H1 (cell line): ENCODE measurements at regions of chr3 and their contacts with region 1.

Region 1: DNA sequence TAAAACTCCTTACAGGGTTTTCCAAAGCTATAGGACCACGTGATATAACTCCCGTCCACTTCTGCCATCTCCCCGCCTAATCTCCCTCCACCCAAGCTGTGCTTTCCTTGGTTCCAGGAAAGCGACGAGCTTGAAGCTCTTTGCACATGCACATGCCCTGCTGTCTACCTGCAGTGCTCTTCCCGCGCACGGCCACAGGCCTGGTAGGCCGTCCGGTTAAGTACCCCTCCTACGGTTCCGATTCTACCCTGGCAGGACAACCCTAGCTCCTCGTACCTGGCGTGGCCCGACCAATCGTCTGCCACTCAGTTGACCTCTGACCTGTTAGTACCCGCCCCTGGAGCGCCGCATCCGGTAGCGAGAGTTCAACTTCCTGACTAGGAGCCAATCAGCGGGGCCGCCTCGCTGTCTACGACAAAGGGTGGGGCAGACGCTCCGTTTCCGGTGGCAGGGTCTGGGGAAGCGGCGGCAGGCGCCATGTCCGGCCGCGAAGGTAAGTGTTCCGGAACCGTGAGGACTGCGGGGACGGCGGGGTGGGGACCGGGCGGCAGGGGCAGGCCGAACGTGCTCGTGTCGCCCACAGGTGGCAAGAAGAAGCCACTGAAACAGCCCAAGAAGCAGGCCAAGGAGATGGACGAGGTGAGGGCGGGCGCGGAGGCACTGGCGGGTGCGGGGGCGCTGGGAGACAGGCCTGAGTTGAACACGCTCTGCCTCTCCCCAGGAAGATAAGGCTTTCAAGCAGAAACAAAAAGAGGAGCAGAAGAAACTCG is at the starts of genes CCDC51 and TMA7:
- DNase-seq: peak; percentile 94 to 97
- H3K4me3 ChIP-seq: peak within 1 kb of the TSS; percentile 80 to 99 (median 94)
- H3K27ac ChIP-seq: peak within 1 kb of the TSS; percentile 80
- H3K4me1 ChIP-seq: peaks cover 0 to 8% (median 3%) of the 10 kb centered on the region in 4 experiments; a peak in 5 of 7 replicates
- H3K27me3 ChIP-seq: no peaks in the 10 kb centered on the region
- CTCF ChIP-seq: no peak
- EP300 ChIP-seq: no peak
- POLR2A ChIP-seq: peak; percentile 77 to 88; a peak in 2 of 3 replicates
- RAD21 ChIP-seq: no peak
- total RNA-seq, gene CCDC51: 20.3 and 21.3 TPM in 2 replicates
- total RNA-seq, gene TMA7: 305 and 322 TPM in 2 replicates

Region 2: GRCh38 chr3:48188266-48189201 is 251.5 kb before region 1 on chr3 and contains the start of gene CDC25A:
- CTCF ChIA-PET with region 1: interaction called, 23 read pairs
- POLR2A ChIA-PET with region 1: interaction called, 11 read pairs
- DNase-seq: peak; percentile 92 to 98
- H3K4me3 ChIP-seq: peak within 1 kb of the TSS; percentile 65 to 98 (median 87)
- H3K27ac ChIP-seq: peak within 1 kb of the TSS; percentile 74
- H3K4me1 ChIP-seq: peaks cover 0 to 12% (median 8%) of the 10 kb centered on the region in 4 experiments; a peak in 5 of 7 replicates
- H3K27me3 ChIP-seq: no peaks in the 10 kb centered on the region
- CTCF ChIP-seq: no peak
- EP300 ChIP-seq: no peak
- POLR2A ChIP-seq: peak; percentile 81 to 88
- RAD21 ChIP-seq: no peak
- total RNA-seq, gene CDC25A: 62.1 and 65.0 TPM in 2 replicates

Region 3: DNA sequence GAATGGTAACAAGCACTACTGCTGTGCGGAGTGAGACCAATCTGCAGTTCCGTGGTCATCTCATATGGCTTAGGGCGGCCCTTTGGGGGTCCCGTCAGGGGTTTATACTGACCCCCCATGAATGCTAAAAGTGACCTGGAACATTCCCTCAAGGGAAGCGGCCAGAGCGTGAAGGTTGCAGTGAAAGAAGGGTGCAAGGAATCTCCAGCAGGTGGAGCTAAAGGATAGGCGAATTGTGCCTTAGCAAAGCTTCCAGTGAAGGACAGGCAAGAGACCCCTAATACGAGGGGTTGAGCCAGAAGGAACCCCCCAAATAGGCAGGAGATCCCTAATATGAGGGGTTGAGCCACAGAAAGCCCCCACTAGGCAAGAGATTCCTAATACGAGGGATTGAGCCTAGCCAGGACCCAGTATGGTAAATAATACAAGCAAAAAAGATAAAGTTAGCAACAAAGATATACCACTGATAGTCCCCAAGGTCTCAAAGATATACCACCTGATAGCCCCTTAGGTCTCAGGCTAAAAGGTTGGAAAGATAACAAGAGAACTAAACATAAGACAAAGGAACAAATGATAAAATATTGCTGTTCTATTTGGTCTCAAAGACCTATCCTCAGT is 166.3 kb before region 1 on chr3:
- CTCF ChIA-PET with region 1: interaction called, 138 read pairs
- POLR2A ChIA-PET with region 1: interaction called, 24 read pairs
- DNase-seq: peak; percentile 39 to 73
- H3K4me3 ChIP-seq: no peak overlapping the region
- H3K27ac ChIP-seq: no peak overlapping the region
- H3K4me1 ChIP-seq: peaks cover 0 to 26% (median 18%) of the 10 kb centered on the region in 4 experiments; a peak in 5 of 7 replicates
- H3K27me3 ChIP-seq: no peaks in the 10 kb centered on the region
- CTCF ChIP-seq: peak; percentile 63 to 81 (median 77)
- EP300 ChIP-seq: no peak
- POLR2A ChIP-seq: no peak; a peak in 1 of 3 replicates
- RAD21 ChIP-seq: peak; percentile 88 to 91

Region 4: DNA sequence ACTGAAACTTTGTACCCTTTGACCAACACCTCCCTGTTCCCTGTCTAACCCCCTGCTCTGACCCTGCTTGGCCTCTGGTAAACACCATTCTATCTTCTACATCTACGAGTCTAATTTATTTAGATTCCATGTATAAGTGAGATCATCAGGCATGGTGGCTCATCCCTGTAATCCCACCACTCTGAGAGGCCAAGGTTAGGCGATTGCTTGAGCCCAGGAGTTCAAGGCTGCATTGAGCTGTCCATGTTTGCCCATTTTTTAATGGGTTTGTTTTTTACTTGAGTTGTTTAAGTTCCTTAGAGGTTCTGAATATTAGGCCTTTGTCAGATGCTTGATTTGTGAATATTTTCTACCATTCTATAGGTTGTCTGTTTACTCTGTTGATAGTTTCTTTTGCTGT is 51.0 kb before region 1 on chr3:
- CTCF ChIA-PET with region 1: interaction called, 10 read pairs
- POLR2A ChIA-PET with region 1: interaction called, 3 read pairs
- DNase-seq: no peak
- H3K4me3 ChIP-seq: no peak overlapping the region
- H3K27ac ChIP-seq: no peak overlapping the region
- H3K4me1 ChIP-seq: no peaks in the 10 kb centered on the region
- H3K27me3 ChIP-seq: no peaks in the 10 kb centered on the region
- CTCF ChIP-seq: no peak
- EP300 ChIP-seq: no peak
- POLR2A ChIP-seq: no peak
- RAD21 ChIP-seq: no peak

Region 5: DNA sequence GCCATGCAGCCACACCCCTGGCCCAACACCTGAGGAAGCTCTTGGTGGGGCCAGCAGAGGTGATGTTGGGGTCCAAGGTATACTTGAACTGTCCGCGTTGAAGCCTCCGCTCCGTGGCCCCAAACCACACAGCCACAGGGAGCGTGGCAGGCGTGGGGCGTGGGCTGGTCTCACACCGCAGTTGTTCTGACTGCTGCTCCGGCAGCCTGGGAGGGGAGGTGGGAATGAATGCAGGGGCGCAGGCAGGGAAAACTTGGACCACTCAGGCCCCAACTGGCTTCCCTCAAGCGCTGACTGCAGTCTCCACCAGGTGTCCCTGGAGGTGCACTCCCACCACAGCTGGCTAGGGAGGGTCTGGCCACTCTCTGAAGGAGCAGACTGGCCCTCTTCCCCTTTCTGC is 24.5 kb before region 1 on chr3:
- CTCF ChIA-PET with region 1: interaction called, 130 read pairs
- POLR2A ChIA-PET with region 1: interaction called, 650 read pairs
- DNase-seq: no peak
- H3K4me3 ChIP-seq: no peak overlapping the region
- H3K27ac ChIP-seq: no peak overlapping the region
- H3K4me1 ChIP-seq: no peaks in the 10 kb centered on the region
- H3K27me3 ChIP-seq: no peaks in the 10 kb centered on the region
- CTCF ChIP-seq: peak in 2 of 3 experiments; percentile 43 to 50; a peak in 3 of 4 replicates
- EP300 ChIP-seq: no peak
- POLR2A ChIP-seq: no peak
- RAD21 ChIP-seq: peak; percentile 17 to 49; a peak in 3 of 4 replicates

Region 6: DNA sequence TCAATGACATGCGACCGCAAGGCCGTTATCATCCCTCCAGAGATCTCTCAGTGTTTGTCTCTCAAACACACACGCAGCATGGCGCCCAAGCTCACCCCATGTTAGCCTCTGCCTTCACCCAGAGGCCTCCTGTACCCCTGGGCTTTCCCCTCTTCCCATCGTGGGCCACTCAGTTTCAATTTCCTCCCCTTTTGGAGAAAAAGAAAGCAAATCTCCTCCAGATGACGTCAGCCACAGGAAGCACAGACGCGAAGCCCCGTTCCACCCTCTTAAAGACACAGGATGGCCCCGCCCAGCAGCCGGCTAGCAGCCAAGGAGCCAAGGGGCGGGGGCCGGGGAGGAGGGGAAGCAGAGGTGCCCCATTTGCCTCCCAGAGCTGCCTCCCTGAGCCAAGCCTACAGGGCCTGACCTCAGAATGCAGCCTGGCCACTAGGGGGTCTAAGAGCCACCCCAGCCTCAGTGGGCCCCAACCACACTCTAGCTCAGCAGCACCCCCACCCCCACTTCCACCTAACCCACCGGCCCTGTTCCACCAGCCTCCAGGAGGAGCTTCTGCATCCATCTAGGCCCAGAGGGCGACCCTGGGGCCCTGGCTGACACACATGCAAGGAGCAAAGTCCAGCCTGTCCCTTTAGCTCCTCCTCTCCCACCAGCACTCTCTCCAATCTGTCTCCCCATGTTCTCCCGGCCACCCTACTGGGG is 33.1 kb after region 1 on chr3:
- CTCF ChIA-PET with region 1: interaction called, 11 read pairs
- POLR2A ChIA-PET with region 1: interaction called, 13 read pairs
- DNase-seq: peak; percentile 89 to 94
- H3K4me3 ChIP-seq: peak overlapping the region; percentile 54 to 79 (median 69)
- H3K27ac ChIP-seq: peak overlapping the region; percentile 97
- H3K4me1 ChIP-seq: peaks cover 0 to 28% (median 19%) of the 10 kb centered on the region in 4 experiments; a peak in 6 of 7 replicates
- H3K27me3 ChIP-seq: no peaks in the 10 kb centered on the region
- CTCF ChIP-seq: peak in 2 of 3 experiments; percentile 56 to 65; a peak in 3 of 4 replicates
- EP300 ChIP-seq: no peak
- POLR2A ChIP-seq: peak in 1 of 2 experiments; percentile 87; a peak in 1 of 3 replicates
- RAD21 ChIP-seq: peak; percentile 27 to 43; a peak in 3 of 4 replicates

Region 7: DNA sequence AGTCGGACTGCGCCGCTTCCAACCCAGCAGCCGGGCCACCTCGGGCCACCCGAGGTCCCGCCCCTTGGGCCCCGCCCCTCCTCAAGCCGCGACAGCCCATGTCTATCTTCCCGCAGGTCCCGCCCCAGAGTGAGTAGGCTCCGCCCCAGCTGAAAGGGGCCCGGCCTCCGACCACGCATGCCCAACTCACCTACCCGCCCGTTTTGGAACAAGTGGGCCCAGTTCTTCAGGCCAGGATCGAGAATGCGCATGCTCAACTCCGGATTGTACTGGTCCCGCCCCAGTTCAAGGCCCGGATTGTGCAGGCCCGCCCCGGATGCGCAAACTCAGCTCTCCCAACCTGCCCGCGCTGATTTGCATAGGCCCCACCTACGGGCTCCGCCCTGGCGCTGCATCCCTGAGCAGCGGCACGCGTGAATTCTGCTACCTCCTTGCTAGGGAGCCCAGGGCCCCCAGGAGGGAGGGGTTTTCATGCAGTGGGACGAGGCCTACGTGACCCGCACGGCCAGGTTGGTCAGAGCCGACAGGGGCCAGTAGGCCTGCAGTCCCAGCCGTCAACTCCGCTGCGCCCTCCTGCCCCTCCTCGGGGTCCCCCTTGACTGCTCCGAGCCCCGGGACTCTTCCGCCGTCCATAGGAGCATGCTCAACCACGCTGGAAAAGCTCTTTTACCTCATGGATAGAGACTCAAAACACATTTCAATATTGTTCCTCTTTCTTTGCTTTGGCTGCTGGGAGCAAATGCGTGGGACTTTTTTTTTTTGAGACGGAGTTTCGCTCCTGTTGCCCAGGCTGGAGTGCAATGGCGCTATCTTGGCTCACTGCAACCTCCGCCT is 117.0 kb after region 1 on chr3 and contains the start of gene PFKFB4:
- CTCF ChIA-PET with region 1: interaction called, 10 read pairs
- POLR2A ChIA-PET with region 1: interaction called, 13 read pairs
- DNase-seq: peak; percentile 99 to 100
- H3K4me3 ChIP-seq: peak within 1 kb of the TSS; percentile 67 to 90 (median 73)
- H3K27ac ChIP-seq: peak within 1 kb of the TSS; percentile 67
- H3K4me1 ChIP-seq: peaks cover 4 to 33% (median 22%) of the 10 kb centered on the region in 4 experiments
- H3K27me3 ChIP-seq: no peaks in the 10 kb centered on the region
- CTCF ChIP-seq: peak in 1 of 3 experiments; percentile 36; a peak in 1 of 4 replicates
- EP300 ChIP-seq: no peak
- POLR2A ChIP-seq: peak in 1 of 2 experiments; percentile 82; a peak in 2 of 3 replicates
- RAD21 ChIP-seq: no peak
- total RNA-seq, gene PFKFB4: 10.7 and 11.3 TPM in 2 replicates